Activated T-helper 1 cell treated with anti-CD3 and anti-CD28 coated beads, Interleukin-12 subunit alpha, Interleukin-12 subunit beta, Interleukin-2, Interleukin-4 antibody, amounts not matched to agents 30 ng/mL and 10 ng/mL and 1 ng/mL, durations not matched to agents 14 hours and 24 hours and 36 hours (primary cell): ENCODE measurements at regions of chr3 and their contacts with region 1.

Region 1: GRCh38 chr3:31132132-31132769 is 237.8 kb upstream of the GADL1 start:
- DNase-seq: no peak
- H3K4me3 Mint-ChIP-seq: no peak overlapping the region
- H3K27ac Mint-ChIP-seq: no peak overlapping the region
- H3K4me1 Mint-ChIP-seq: peaks cover 17% of the 10 kb centered on the region
- H3K27me3 Mint-ChIP-seq: no peaks in the 10 kb centered on the region

Region 2: DNA sequence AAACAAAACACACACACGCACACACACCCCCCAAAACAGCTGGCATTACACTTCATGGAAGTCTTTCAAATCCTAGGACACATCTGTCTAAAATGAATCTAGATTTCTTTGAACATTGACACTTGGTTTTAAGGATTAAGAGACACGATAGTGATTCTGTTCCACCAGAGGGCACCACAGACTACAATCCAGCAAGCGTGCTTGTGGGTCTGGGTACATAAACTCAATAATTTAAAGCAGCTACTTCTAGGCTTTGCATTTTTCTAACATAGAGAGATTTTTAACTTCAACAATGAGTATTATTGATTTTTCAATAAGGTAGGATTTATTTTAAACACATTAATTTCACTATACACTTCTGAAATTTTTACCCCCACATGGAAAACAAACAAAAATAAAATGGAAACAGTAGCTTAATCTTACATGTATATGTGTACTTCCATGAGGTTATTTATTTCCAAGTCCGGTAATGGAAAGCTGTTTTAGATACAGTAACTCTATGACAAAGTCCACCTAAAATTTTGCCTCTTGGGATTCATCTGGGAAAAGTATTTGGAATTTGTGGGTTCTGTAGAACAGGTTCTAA is 1089.9 kb before region 1 on chr3:
- intact Hi-C with region 1: loop called (anchors 1 kb)
- DNase-seq: peak; percentile 20
- H3K4me3 Mint-ChIP-seq: no peak overlapping the region
- H3K27ac Mint-ChIP-seq: no peak overlapping the region
- H3K4me1 Mint-ChIP-seq: no peaks in the 10 kb centered on the region
- H3K27me3 Mint-ChIP-seq: peaks cover 13% of the 10 kb centered on the region

Region 3: GRCh38 chr3:30112902-30113484 is 1019.3 kb before region 1 on chr3:
- intact Hi-C with region 1: loop called (anchors 5 kb)
- DNase-seq: no peak
- H3K4me3 Mint-ChIP-seq: no peak overlapping the region
- H3K27ac Mint-ChIP-seq: no peak overlapping the region
- H3K4me1 Mint-ChIP-seq: peaks cover 4% of the 10 kb centered on the region
- H3K27me3 Mint-ChIP-seq: peaks cover 12% of the 10 kb centered on the region

Region 4: GRCh38 chr3:30768703-30769685 is 363.3 kb before region 1 on chr3:
- intact Hi-C with region 1: loop called (anchors 1 kb)
- DNase-seq: peak; percentile 59
- H3K4me3 Mint-ChIP-seq: no peak overlapping the region
- H3K27ac Mint-ChIP-seq: no peak overlapping the region
- H3K4me1 Mint-ChIP-seq: peaks cover 14% of the 10 kb centered on the region
- H3K27me3 Mint-ChIP-seq: peaks cover 20% of the 10 kb centered on the region

Region 5: DNA sequence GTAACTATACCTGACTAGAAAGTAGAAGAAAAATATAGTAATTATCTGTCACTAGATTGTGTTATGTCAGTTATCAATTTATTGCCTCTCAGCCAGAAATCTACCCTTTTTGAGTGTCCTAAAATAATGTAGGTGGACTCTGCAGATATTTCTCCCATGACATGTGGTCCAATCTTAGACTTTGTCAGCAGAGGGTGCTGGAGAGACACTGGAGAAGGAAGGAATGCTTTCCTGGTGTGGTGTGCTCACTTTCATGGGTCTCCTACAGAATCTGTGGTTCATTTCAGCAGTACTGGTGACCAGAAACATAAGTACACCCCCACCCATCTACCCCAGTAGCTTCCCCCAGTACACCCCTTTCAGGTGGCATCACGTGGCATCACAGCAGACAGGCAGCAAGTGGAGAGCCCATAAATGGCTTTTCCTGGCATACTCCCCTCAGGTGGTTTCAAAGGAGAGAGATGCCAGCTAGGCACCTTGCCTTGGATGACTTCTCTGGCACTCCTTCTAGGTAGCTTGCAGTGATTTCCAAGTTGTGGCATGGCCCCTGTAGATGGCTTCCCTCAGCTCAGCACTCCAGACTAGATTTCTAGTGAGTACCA is 352.5 kb before region 1 on chr3:
- intact Hi-C with region 1: loop called (anchors 1 kb)
- DNase-seq: no peak
- H3K4me3 Mint-ChIP-seq: no peak overlapping the region
- H3K27ac Mint-ChIP-seq: no peak overlapping the region
- H3K4me1 Mint-ChIP-seq: no peaks in the 10 kb centered on the region
- H3K27me3 Mint-ChIP-seq: peaks cover 6% of the 10 kb centered on the region

Region 6: GRCh38 chr3:30934208-30934550 is 198.1 kb before region 1 on chr3:
- intact Hi-C with region 1: loop called (anchors 2 kb)
- DNase-seq: no peak
- H3K4me3 Mint-ChIP-seq: no peak overlapping the region
- H3K27ac Mint-ChIP-seq: no peak overlapping the region
- H3K4me1 Mint-ChIP-seq: peaks cover 8% of the 10 kb centered on the region
- H3K27me3 Mint-ChIP-seq: peaks cover 2% of the 10 kb centered on the region